Posterior vena cava (tissue), 2 donors: ENCODE measurements at regions of chr15 and their contacts with region 1.

Region 1: DNA sequence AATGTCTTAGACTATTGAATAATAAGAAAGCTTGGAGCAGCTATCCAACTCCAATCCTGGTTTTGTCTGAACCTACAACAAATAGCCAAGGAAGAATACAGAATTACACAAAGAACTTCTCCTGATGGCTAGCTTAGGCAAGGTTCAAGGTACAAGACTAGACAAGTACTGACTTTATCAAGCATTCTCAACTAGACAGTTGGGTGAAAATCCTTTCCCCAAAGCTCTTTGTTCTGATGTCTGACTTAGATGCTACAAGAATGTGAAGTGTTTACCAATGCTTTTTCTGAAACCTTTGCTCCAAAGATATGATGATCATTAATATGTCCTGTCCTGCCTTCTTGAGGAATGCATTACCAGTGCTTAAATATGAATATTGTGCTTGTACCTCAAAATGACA is 113.8 kb downstream of the ANXA2 start:
- DNase-seq: no peak

Region 2: DNA sequence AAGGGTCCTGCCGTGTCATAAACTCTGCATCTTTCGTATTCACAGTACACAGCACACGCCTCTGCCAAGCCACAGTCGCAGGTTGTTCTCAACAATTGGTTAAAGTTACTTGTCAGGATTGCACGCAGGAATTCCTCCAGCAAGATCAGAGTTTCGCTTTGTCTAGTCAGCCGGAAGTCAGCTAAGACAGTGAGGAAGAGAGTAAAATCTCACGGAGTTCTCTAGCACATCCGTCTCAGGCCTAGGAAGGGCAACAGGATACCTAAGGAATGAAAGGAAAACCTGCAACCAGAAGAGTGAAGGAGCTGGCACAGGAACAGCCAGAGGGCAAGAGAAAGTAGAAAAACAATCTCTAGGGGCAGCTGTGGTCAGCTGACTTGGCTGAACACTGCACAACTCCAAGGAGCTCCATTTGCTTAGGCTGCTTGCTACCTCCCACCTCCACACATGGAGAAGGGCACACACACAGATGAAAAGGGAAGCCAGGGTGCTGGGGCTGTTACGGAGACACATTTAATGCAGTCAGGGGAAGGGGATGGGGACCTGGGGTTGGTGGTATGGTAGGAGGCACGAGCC is 921.5 kb after region 1 on chr15:
- intact Hi-C with region 1: loop called in 1 of 2 experiments (anchors 5 kb)
- DNase-seq: no peak